WTC11 (cell line): ENCODE measurements at regions of chr21 and their contacts with region 1.

Region 1: DNA sequence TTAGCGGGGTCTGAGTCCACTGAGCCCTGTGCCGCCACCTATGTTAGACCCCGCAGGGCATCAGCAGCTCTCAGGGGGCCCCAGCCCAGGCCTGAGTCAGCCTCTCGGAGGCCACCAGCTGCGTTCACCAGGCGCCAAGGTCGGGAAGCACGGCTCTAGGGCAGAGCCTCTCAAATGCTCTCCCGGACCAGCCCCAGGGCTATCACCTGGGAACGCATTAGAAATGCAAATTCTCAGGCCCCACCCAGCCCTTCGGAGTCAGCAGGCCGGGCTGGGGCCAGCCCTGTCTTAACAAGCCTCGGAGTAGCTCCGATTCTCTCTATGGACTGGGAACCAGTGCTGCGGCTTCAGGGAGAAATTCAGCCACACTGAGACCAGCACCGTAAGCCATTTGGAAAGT is 37.2 kb upstream of the TSPEAR start:
- DNase-seq: peak; percentile 84
- ATAC-seq: peak; percentile 93
- H3K4me3 Mint-ChIP-seq: peak overlapping the region; percentile 75
- H3K27ac Mint-ChIP-seq: peak overlapping the region; percentile 99
- H3K4me1 Mint-ChIP-seq: peaks cover 54% of the 10 kb centered on the region
- H3K27me3 Mint-ChIP-seq: peaks cover 22% of the 10 kb centered on the region
- CTCF ChIP-seq: no peak

Region 2: DNA sequence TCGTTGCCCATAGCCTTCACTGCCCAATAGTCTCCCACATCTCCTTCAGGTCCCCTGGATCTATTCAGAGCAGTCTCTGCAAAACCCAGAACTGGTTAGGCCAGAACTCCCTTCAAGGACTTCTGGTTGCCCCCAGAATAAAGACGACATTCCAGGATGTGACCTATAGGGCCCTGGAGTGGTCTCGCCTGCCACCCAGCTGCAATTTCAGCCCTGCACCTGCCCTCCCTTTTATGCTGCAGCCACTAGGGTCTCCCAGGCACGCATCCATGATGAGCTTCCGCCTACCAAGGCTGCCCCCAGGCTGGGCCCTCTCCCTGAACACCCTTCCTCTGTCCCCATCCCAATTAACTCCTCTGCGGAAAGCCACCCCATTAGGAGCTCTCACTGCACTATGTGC is 30.1 kb before region 1 on chr21:
- CTCF ChIA-PET with region 1: interaction called, 13 read pairs
- POLR2A ChIA-PET with region 1: interaction called, 4 read pairs
- DNase-seq: peak; percentile 61
- ATAC-seq: peak; percentile 93
- H3K4me3 Mint-ChIP-seq: no peak overlapping the region
- H3K27ac Mint-ChIP-seq: peak overlapping the region; percentile 13
- H3K4me1 Mint-ChIP-seq: peaks cover 46% of the 10 kb centered on the region
- H3K27me3 Mint-ChIP-seq: peaks cover 30% of the 10 kb centered on the region
- CTCF ChIP-seq: no peak

Region 3: DNA sequence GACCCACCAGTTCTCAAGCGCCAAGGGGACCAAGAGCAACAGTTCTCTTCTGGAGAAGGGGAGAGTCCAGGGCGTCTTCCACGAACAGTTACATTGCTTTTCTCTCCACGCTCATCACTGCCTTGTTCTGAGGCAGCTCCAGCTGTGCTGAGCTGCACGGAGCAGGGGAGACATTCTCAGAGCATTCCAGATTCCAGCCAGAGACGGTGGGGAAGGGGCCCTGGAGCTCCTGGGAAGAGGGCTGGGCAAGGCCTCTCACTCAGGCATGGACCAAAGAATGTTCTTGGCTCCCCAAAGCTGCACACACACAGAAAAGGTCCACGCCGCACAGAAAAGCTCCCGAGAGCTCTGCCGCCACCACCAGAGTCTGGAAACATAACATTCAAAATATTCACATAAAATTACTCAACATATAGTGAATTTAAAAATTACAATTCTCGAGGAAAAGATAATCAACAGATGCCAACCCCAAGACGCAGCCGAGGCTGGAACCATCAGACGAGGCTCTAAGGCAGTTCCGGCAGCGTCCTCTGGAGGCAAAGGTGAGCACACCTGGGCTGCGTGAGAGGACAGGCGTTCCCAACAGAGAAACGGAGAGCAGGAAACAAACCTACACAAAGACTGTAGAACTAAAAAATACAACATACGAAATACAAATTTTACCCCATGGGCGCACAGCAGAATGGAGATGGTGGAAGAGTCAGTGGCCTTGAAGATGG is 12.5 kb after region 1 on chr21:
- CTCF ChIA-PET with region 1: interaction called, 18 read pairs
- POLR2A ChIA-PET with region 1: interaction called, 4 read pairs
- DNase-seq: peak; percentile 75
- ATAC-seq: peak; percentile 82
- H3K4me3 Mint-ChIP-seq: no peak overlapping the region
- H3K27ac Mint-ChIP-seq: peak overlapping the region; percentile 71; the same call in 1 of the 2 replicates
- H3K4me1 Mint-ChIP-seq: peaks cover 34% of the 10 kb centered on the region
- H3K27me3 Mint-ChIP-seq: peaks cover 8% of the 10 kb centered on the region
- CTCF ChIP-seq: peak; percentile 46; the same call in 1 of the 2 replicates